Esophagus squamous epithelium (tissue), 5 donors: ENCODE measurements at regions of chr18 and their contacts with region 1.

Region 1: GRCh38 chr18:12049978-12050811 is 43.4 kb upstream of the ANKRD62 start:
- DNase-seq: no peak
- H3K4me3 ChIP-seq: no peak overlapping the region
- H3K27ac ChIP-seq: no peak overlapping the region
- H3K4me1 ChIP-seq: no peaks in the 10 kb centered on the region
- H3K27me3 ChIP-seq: no peaks in the 10 kb centered on the region
- CTCF ChIP-seq: no peak
- POLR2A ChIP-seq: no peak

Region 2: DNA sequence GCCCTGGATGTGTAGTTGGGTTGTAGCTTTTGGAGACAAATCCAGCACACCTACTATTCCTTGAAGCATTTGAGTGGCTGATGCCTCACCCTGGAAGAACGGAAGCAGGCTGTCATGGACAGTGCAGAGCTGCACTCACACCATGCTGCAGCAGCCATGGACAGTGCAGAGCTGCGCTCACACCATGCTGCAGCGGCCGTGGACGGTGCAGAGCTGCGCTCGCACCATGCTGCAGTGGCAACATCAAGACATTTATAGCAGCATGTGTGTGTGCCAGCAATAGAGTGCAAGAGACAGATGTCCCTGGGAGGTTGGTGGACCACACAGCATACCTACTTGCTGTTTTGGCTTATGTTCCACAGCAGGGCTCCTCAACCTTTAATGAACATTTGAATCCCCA is 330.6 kb before region 1 on chr18:
- intact Hi-C with region 1: no loop called
- DNase-seq: no peak
- H3K4me3 ChIP-seq: no peak overlapping the region
- H3K27ac ChIP-seq: no peak overlapping the region
- H3K4me1 ChIP-seq: no peaks in the 10 kb centered on the region
- H3K27me3 ChIP-seq: no peaks in the 10 kb centered on the region
- CTCF ChIP-seq: no peak
- POLR2A ChIP-seq: no peak

Region 3: GRCh38 chr18:12246849-12247808 is 196.9 kb after region 1 on chr18:
- intact Hi-C with region 1: loop called (anchors 10 kb)
- DNase-seq: no peak
- H3K4me3 ChIP-seq: no peak overlapping the region
- H3K27ac ChIP-seq: no peak overlapping the region
- H3K4me1 ChIP-seq: no peaks in the 10 kb centered on the region
- H3K27me3 ChIP-seq: peaks cover 0 to 67% (median 0%) of the 10 kb centered on the region in 4 donors
- CTCF ChIP-seq: peak in 1 of 6 experiments; percentile 18
- POLR2A ChIP-seq: no peak